Dendritic cell treated with granulocyte-macrophage colony-stimulating factor and Interleukin-4, amounts not matched to agents 40 ng/mL and 50 ng/mL, for 4 days (primary cell): ENCODE measurements at regions of chr12 and their contacts with region 1.

Region 1: DNA sequence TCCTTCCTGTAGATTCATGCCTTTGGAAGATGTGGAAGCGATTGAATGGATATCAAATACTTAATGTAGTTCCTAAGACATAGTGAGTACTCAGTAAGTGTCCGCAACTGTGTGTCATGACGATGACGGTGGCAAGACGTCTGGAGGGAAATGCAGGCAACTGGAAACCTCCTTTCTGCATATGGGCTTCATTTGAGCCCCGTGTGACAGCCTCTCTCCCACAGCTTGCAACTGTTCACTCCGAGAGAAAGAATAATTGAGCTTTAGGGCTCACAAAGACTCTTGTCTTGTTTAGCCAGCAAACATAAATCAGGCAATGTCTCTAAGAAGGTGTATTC is 6.9 kb downstream of the CFAP251 start:
- H3K4me3 Mint-ChIP-seq: no peak overlapping the region
- H3K27ac Mint-ChIP-seq: peak overlapping the region; percentile 22
- H3K4me1 Mint-ChIP-seq: peaks cover 47% of the 10 kb centered on the region
- H3K27me3 Mint-ChIP-seq: no peaks in the 10 kb centered on the region

Region 2: GRCh38 chr12:121590476-121591143 is 334.7 kb before region 1 on chr12:
- intact Hi-C with region 1: no loop called
- H3K4me3 Mint-ChIP-seq: peak overlapping the region; percentile 80
- H3K27ac Mint-ChIP-seq: peak overlapping the region; percentile 88
- H3K4me1 Mint-ChIP-seq: peaks cover 26% of the 10 kb centered on the region
- H3K27me3 Mint-ChIP-seq: peaks cover 8% of the 10 kb centered on the region

Region 3: DNA sequence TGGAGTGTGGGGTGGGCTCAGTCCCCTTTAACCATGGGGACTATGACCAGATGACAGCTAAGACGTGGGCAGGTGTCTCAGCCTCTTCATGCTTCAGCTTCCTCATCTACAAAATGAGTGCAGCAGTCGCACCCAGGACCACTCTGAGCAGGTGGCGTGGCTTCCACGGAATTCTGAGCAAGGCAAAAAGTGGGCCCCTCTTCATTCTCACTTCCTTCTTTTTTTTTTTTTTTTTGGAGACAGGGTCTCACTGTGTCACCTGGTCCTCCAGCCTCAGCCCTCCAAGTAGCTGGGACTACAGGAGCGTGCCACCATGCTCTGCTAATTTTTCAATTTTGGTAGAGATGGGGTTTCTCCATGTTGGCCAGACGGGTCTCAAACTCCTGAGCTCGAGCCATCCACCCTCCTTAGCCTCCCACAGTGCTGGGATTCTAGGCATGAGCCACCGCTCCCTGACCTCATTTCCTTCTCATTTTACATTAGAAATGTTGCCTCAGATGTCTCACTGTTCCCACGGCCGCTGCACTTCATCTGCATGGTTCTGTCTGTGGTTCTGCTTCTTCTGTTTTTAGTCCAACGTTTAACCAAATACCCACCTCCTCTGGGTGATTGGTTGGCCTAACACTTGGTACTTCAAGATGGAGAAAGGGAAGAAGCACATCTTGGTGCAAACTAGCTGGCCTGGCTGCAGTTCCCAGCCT is 55.0 kb after region 1 on chr12:
- intact Hi-C with region 1: loop called (anchors 10 kb)
- H3K4me3 Mint-ChIP-seq: peak overlapping the region; percentile 48
- H3K27ac Mint-ChIP-seq: peak overlapping the region; percentile 98
- H3K4me1 Mint-ChIP-seq: peaks cover 51% of the 10 kb centered on the region
- H3K27me3 Mint-ChIP-seq: peaks cover 1% of the 10 kb centered on the region

Region 4: DNA sequence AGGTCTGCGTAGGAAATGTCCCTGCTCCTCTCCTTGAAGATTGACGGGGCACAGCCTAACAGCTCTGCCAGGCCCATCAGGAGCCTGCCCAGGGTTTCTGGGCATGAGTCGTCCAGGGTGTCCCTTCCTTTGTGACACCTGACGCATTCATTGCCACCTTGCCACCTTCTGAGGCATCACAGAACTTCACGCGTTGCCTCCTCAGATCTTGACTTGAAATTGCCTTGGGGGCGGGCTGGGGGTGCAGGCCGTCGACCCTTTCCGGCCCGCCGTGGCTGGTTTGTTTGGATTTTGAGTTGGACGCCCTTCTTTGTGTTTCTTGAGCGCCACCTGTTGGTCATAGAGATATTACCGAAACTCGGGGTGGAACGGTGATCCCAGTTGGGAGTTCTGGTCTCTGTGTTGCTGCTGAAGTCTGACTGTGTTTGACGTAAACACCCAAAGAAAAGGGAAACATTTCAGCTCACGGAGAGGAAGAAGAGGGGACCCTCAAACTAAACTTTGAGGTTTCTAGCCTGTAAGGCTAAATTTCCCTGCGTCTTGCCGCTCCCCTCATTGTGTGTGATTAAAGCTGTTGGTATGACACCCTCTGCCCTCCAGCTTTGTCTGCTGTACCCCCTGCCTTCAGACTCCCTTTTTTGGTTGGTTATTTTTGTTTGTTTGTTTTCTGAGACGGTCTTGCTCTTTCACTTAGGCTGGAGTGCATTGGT is 197.9 kb after region 1 on chr12:
- intact Hi-C with region 1: loop called (anchors 10 kb)
- H3K4me3 Mint-ChIP-seq: peak overlapping the region; percentile 31
- H3K27ac Mint-ChIP-seq: peak overlapping the region; percentile 45
- H3K4me1 Mint-ChIP-seq: peaks cover 51% of the 10 kb centered on the region
- H3K27me3 Mint-ChIP-seq: no peaks in the 10 kb centered on the region